Sigmoid colon (tissue), 7 donors: ENCODE measurements at regions of chr1 and their contacts with region 1.

Region 1: GRCh38 chr1:213051127-213051880 is at the start of gene RPS6KC1:
- DNase-seq: peak; percentile 91
- H3K4me3 ChIP-seq: peak within 1 kb of the TSS; percentile 76 to 96 (median 84)
- H3K27ac ChIP-seq: peak within 1 kb of the TSS; percentile 77 to 88 (median 83)
- H3K4me1 ChIP-seq: peaks cover 0 to 25% (median 10%) of the 10 kb centered on the region in 4 donors
- H3K27me3 ChIP-seq: peaks cover 0 to 17% (median 0%) of the 10 kb centered on the region in 3 donors
- CTCF ChIP-seq: peak in 2 of 4 experiments; percentile 13 to 15
- EP300 ChIP-seq: peak in 1 of 4 donors; percentile 8
- POLR2A ChIP-seq: peak in 1 of 2 donors; percentile 11
- total RNA-seq, gene RPS6KC1: 23.1 to 37.4 (median 30.5) TPM

Region 2: DNA sequence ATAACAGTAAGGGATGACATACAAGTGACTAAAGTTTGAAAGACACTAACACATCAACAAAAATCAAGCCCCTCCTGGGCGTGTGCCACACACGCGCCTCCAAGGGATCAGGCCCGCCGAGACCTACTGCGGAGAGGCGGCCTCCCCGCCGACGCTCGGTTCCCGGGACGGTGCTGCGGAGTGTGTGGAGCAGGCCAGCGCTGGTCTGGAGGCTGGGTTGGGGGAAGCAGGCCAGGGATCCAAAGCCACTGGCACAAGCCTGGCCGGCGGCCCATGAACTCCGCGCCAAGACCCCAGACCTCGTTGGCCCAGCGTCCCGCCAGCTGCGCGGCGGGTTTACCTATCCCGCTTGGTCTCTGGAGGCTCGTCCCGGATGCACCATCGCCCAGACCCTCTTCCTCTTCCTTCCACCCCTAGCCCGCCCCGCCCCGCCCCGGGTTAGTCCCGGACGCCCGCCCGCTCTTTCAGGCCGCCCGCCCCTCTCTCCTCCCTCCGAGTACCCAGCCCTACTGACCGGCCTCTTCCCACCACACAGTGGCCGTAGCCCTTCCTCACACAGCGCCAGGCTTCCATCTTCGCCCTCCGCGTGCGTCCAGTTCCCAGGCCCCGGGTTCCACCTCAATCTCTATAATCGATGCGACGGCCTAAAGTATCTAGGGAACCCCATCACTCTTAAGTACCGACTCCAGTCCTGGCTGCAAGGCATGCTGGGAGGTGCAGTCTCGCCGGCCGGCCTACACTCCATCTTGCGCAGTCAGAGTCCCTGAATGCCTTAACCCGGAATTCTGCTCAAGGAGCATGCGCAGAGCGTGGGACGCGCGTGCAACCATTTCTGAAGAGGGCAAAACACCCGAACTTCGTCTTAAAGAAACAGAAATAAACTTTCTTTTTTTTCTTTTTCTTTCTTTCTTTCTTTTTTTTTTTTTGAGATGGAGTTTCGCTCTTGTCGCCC is 35.9 kb before region 1 on chr1 and contains the start of gene ANGEL2:
- intact Hi-C with region 1: loop called (anchors 1 kb)
- DNase-seq: peak; percentile 98
- H3K4me3 ChIP-seq: peak within 1 kb of the TSS; percentile 72 to 93 (median 82)
- H3K27ac ChIP-seq: peak within 1 kb of the TSS; percentile 88 to 96 (median 94)
- H3K4me1 ChIP-seq: peaks cover 0 to 22% (median 16%) of the 10 kb centered on the region in 4 donors
- H3K27me3 ChIP-seq: no peaks in the 10 kb centered on the region
- CTCF ChIP-seq: no peak
- EP300 ChIP-seq: no peak
- POLR2A ChIP-seq: peak in 1 of 2 donors; percentile 7
- total RNA-seq, gene ANGEL2: 37.9 to 57.8 (median 44.8) TPM